Activated CD4-positive, alpha-beta T cell treated with anti-CD3 and anti-CD28 coated beads, Interleukin-2, amount 10 ng/mL, durations not matched to agents 24 days and 14 days (primary cell): ENCODE measurements at regions of chr5 and their contacts with region 1.

Region 1: DNA sequence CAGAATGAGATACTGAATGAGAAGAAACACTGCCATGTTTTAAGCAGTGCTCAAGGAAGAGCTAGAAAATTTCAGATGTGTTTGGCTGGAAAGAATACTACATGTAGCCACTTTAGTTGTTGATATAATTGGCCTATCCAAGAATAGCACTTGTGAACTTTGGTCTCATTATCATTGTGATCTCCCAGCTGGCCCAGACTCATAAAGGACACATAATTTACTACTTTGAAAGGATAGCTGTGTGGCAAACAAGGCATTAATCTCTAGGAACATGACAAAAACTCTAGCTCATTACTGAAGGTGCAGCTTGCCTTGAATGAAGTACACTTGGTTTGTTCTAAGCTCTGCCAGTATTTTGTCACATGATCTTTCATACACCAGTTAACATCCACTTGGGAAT is 356.3 kb downstream of the CSNK1G3 start:
- DNase-seq: no peak
- H3K4me3 Mint-ChIP-seq: no peak overlapping the region
- H3K27ac Mint-ChIP-seq: no peak overlapping the region
- H3K4me1 Mint-ChIP-seq: no peaks in the 10 kb centered on the region
- H3K27me3 Mint-ChIP-seq: no peaks in the 10 kb centered on the region

Region 2: DNA sequence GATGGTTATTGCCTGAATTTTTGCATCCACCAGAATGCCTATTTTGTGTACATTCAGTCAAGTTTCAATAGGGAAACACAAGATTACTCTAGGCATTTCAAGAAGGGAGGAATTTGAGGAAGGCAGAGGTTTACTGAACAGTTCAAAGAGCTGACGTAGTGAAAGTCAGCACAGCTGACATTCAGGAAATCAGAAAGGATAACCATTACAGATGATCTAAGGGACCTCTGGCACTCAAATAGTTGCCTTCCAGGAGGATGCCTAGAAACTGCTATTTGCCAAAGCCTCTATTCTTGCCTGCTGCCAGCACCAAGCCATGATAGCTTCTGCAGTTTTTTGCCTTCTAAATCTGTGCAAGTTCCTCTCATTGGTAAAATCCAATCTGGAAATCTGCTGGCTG is 16.8 kb after region 1 on chr5:
- intact Hi-C with region 1: loop called (anchors 1 kb)
- DNase-seq: no peak
- H3K4me3 Mint-ChIP-seq: no peak overlapping the region
- H3K27ac Mint-ChIP-seq: no peak overlapping the region
- H3K4me1 Mint-ChIP-seq: no peaks in the 10 kb centered on the region
- H3K27me3 Mint-ChIP-seq: no peaks in the 10 kb centered on the region